CD4-positive, alpha-beta memory T cell (primary cell): ENCODE measurements at regions of chr5 and their contacts with region 1.

Region 1: GRCh38 chr5:7815892-7816534 is 34.9 kb downstream of the CFAP90 start:
- DNase-seq: peak; percentile 39 to 52 (median 41)
- H3K4me3 ChIP-seq: no peak overlapping the region
- H3K4me3 Mint-ChIP-seq: no peak overlapping the region
- H3K27ac ChIP-seq: no peak overlapping the region
- H3K27ac Mint-ChIP-seq: no peak overlapping the region
- H3K4me1 ChIP-seq: peaks cover 4% of the 10 kb centered on the region
- H3K4me1 Mint-ChIP-seq: peaks cover 0 to 2% (median 0%) of the 10 kb centered on the region in 4 donors
- H3K27me3 ChIP-seq: no peaks in the 10 kb centered on the region
- H3K27me3 Mint-ChIP-seq: peaks cover 20 to 39% of the 10 kb centered on the region in 2 donors

Region 2: GRCh38 chr5:6780802-6781391 is 1035.1 kb before region 1 on chr5:
- CTCF ChIA-PET with region 1: no interaction called
- POLR2A ChIA-PET with region 1: no interaction called
- intact Hi-C with region 1: loop called (anchors 5 kb)
- DNase-seq: peak in 2 of 5 donors; percentile 13 to 15
- H3K4me3 ChIP-seq: no peak overlapping the region
- H3K4me3 Mint-ChIP-seq: no peak overlapping the region
- H3K27ac ChIP-seq: no peak overlapping the region
- H3K27ac Mint-ChIP-seq: no peak overlapping the region
- H3K4me1 ChIP-seq: no peaks in the 10 kb centered on the region
- H3K4me1 Mint-ChIP-seq: peaks cover 0 to 3% (median 1%) of the 10 kb centered on the region in 4 donors
- H3K27me3 ChIP-seq: no peaks in the 10 kb centered on the region
- H3K27me3 Mint-ChIP-seq: peaks cover 7 to 24% of the 10 kb centered on the region in 2 donors

Region 3: DNA sequence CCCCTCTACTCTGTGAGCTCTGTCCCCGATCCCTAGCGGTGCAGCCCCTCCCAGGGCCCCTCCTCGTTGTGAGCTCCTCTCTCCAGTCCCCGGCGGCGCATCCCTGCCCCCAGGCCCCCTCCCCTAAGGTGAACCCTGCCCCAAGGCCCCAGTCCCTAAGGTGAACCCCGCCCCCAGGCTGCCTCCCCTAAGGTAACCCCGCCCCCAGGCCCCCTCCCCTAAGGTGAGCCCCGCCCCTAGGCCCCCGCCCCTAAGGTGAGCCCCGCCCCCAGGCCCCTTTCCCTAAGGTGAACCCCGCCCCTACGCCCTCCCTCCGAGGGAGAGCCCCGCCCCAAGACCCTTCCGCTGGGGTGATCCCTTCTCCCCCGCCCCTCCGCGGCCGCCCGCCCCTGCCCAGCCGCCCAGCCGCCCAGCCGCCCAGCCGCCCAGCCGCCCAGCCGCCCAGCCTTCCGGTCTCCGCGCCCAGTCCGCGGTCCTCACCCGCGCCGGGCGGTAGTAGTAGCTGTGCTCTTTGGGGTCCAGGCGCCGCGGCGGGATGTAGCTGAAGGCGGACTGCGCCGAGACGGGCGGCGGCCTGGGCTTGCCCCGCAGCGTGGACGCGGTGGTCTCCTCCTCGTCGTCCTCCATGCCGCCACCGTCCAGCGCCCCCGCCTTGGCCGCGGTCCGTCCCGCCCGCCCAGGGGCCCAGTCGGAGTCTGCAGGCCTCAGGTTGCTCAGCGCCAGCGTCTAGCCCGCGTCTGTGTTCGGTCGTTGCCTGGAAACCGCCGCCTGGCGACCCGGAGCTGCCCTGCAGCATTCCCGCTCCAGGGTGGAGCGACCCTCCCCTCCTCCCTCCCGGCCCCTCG is 34.6 kb after region 1 on chr5 and contains the start of gene CFAP90:
- CTCF ChIA-PET with region 1: interaction called, 11 read pairs
- POLR2A ChIA-PET with region 1: no interaction called
- intact Hi-C with region 1: no loop called
- DNase-seq: peak in 3 of 5 donors; percentile 27 to 55 (median 32)
- H3K4me3 ChIP-seq: peak within 1 kb of the TSS in 1 of 2 donors; percentile 41
- H3K4me3 Mint-ChIP-seq: peak within 1 kb of the TSS; percentile 80 to 90 (median 86)
- H3K27ac ChIP-seq: no peak within 1 kb of the TSS
- H3K27ac Mint-ChIP-seq: peak within 1 kb of the TSS; percentile 5 to 89 (median 70)
- H3K4me1 ChIP-seq: peaks cover 26% of the 10 kb centered on the region
- H3K4me1 Mint-ChIP-seq: peaks cover 14 to 32% (median 22%) of the 10 kb centered on the region in 4 donors
- H3K27me3 ChIP-seq: peaks cover 15% of the 10 kb centered on the region
- H3K27me3 Mint-ChIP-seq: peaks cover 16 to 17% of the 10 kb centered on the region in 2 donors
- total RNA-seq, gene CFAP90: not detected

Region 4: DNA sequence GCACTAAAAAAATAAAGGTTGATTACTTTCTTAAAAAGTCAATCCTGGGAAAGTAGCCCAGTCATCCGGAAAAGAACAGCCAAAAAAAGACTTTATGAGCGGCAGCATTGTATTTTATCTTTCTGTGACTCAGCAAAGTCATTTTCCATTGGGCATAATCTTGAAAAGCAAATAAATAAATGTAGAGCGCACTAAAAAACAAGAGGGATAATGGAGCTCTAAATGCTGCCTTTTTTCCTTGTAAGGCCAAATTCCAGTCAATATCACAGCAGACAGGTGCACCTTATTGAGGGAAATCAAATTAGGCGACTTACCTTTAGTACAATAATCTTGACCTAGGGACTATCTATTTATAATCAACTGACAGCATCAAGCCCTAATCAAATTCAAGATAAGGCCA is 319.7 kb after region 1 on chr5:
- CTCF ChIA-PET with region 1: no interaction called
- POLR2A ChIA-PET with region 1: no interaction called
- intact Hi-C with region 1: no loop called
- DNase-seq: no peak
- H3K4me3 ChIP-seq: no peak overlapping the region
- H3K4me3 Mint-ChIP-seq: no peak overlapping the region
- H3K27ac ChIP-seq: no peak overlapping the region
- H3K27ac Mint-ChIP-seq: no peak overlapping the region
- H3K4me1 ChIP-seq: no peaks in the 10 kb centered on the region
- H3K4me1 Mint-ChIP-seq: peaks cover 0 to 7% (median 1%) of the 10 kb centered on the region in 4 donors
- H3K27me3 ChIP-seq: no peaks in the 10 kb centered on the region
- H3K27me3 Mint-ChIP-seq: no peaks in the 10 kb centered on the region